ENCODE measurements at regions of chr5 and their contacts with region 1.

Region 1: GRCh38 chr5:61806491-61807020 is 474.5 kb downstream of the ZSWIM6 start:
- DNase-seq: no peak
- H3K27ac ChIP-seq: no peak overlapping the region
- CTCF ChIP-seq: no peak

Region 2: GRCh38 chr5:61817472-61818326 is 11.1 kb after region 1 on chr5:
- CTCF ChIA-PET with region 1: interaction called, 10 read pairs
- POLR2A ChIA-PET with region 1: no interaction called
- DNase-seq: peak; percentile 63
- H3K27ac ChIP-seq: no peak overlapping the region
- CTCF ChIP-seq: peak; percentile 86

Region 3: DNA sequence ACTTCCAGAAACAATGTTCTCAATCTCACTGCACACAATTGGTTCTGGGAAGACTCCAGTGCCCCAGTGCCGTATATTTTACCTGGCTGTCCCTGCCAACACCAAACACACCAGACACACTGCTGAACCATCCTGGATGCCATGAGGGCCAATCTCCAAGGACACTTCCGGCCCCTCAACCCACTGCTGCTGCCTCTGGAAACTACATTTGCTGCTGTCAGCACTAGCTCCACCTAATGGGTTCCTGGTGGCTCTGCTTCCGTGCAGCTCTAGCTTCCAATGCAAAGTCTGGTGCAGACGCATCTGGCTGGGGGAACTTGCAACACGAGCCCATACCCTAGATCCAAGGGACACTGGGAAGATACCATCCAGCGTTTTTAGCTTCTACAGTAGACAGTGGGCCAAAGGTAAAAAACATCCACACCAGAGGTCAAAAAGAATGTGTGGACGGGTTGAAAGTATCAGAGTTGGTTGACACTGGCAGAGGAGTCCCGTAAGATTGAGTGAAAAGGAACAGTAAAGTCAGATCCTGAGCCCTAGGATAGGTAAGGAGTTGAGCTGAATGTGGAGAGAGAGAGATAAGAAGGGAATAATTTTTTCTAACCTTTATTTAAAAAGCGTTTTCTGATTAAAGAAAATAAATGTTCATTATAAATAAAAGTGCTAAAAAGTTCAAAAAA is 399.7 kb after region 1 on chr5:
- CTCF ChIA-PET with region 1: no interaction called
- POLR2A ChIA-PET with region 1: no interaction called
- DNase-seq: no peak
- H3K27ac ChIP-seq: no peak overlapping the region
- CTCF ChIP-seq: no peak

Measured in RWPE1 (cell line).